Activated CD4-positive, alpha-beta T cell treated with anti-CD3 and anti-CD28 coated beads, Interleukin-2, amount 10 ng/mL, durations not matched to agents 24 days and 14 days (primary cell): ENCODE measurements at regions of chr15 and their contacts with region 1.

Region 1: DNA sequence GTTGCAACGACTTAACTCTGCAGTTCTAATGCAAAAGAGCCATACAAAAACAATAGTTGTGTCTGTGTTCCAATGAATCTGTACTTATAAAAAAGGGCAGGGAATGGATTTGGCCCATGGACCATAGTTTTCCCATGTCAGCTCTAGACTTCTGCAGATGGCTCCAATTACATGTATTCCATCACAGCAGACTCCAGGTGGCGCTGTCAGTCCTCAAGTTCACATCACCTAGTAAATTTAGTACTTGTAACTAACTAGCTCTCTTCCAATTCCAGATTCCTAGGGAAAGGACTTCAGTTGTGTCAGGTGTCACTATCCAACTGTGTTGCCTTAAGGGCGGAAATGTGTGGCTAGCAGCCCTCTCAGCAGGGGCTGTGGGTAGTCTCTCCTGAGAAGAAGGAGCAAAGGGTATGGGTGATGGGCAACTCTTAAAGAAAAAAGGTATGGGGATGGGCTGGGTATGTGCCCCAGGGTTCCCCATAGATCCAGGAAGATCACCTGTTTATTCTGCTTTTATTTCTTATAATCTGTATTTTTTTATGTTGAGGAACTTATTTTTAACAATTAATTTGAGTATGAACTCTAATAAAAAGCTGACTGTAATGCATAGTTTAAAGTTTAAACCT is 36.2 kb downstream of the BBS4 start:
- DNase-seq: peak; percentile 90
- H3K4me3 Mint-ChIP-seq: no peak overlapping the region
- H3K27ac Mint-ChIP-seq: no peak overlapping the region
- H3K4me1 Mint-ChIP-seq: no peaks in the 10 kb centered on the region
- H3K27me3 Mint-ChIP-seq: no peaks in the 10 kb centered on the region

Region 2: DNA sequence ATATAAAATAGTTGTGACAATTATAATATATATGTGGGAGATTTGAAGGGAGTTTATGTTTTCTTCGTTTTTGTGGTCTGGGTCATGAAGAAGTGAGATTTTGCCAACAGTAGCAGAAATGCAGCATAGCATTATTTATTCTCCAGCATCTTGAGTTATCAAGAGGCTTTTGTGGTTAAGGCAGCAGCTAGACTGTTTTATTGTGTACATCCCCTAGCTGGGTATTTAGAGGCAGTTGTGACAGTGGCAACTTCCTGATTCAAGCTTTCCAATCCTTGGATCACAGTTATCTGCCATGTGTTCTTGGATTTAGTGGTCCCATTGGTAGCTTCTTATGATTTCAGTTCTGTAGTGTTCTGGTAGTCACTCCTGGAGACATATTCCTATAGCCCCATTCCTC is 219.0 kb before region 1 on chr15:
- intact Hi-C with region 1: no loop called
- DNase-seq: no peak
- H3K4me3 Mint-ChIP-seq: no peak overlapping the region
- H3K27ac Mint-ChIP-seq: no peak overlapping the region
- H3K4me1 Mint-ChIP-seq: peaks cover 25% of the 10 kb centered on the region
- H3K27me3 Mint-ChIP-seq: no peaks in the 10 kb centered on the region

Region 3: GRCh38 chr15:73034221-73034620 is 312.0 kb after region 1 on chr15:
- intact Hi-C with region 1: no loop called
- DNase-seq: no peak
- H3K4me3 Mint-ChIP-seq: no peak overlapping the region
- H3K27ac Mint-ChIP-seq: no peak overlapping the region
- H3K4me1 Mint-ChIP-seq: no peaks in the 10 kb centered on the region
- H3K27me3 Mint-ChIP-seq: peaks cover 32% of the 10 kb centered on the region

Region 4: GRCh38 chr15:73081321-73081958 is 359.3 kb after region 1 on chr15:
- intact Hi-C with region 1: loop called (anchors 1 kb)
- DNase-seq: peak; percentile 69
- H3K4me3 Mint-ChIP-seq: no peak overlapping the region
- H3K27ac Mint-ChIP-seq: no peak overlapping the region
- H3K4me1 Mint-ChIP-seq: no peaks in the 10 kb centered on the region
- H3K27me3 Mint-ChIP-seq: peaks cover 4% of the 10 kb centered on the region